CD8-positive, alpha-beta memory T cell (primary cell): ENCODE measurements at regions of chr19 and their contacts with region 1.

Region 1: DNA sequence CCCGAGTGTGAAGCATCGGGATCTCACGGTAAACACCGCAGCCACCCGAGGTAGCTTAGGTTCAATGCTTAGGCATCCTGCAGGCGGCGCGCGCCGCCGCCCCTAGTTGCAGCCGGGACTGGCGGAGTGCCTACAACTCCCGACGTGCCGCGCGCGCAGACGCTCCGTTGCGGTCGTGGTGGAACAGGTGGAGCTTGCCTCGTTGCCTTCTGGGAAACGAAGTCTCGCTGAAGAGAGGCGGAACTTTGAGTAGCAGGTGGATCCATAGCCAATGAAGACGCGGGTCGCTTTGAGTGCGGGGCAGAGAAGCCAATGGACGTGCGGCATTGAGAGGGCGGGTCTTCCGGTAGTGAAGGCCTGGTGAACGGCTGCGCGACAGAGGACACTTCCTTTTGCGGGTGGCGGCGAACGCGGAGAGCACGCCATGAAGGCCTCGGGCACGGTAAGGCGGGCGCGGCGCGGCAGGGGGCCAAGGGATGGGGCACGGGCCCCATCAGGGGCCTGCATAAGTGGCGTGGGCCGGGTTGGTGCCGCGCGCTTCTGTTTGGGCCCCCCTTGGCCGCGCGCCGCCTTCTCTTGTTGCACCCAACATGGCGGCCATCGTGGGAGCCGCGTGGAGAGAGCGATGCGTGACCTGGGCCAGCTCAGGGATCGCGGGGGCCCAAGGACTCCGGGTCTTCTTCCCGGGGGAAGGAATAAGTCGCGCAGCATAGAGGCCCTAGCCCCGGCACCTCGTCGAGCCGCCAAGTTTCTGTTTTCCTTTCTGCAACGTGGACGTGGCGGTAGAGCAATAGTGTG is at the start of gene RPL18A:
- DNase-seq: peak; percentile 97 to 99 (median 99)
- H3K4me3 ChIP-seq: peak within 1 kb of the TSS; percentile 95
- H3K4me3 Mint-ChIP-seq: peak within 1 kb of the TSS; percentile 93 to 100 (median 97)
- H3K27ac ChIP-seq: peak within 1 kb of the TSS; percentile 80
- H3K27ac Mint-ChIP-seq: peak within 1 kb of the TSS; percentile 81 to 100 (median 96)
- H3K4me1 ChIP-seq: peaks cover 27% of the 10 kb centered on the region
- H3K4me1 Mint-ChIP-seq: peaks cover 34 to 40% (median 36%) of the 10 kb centered on the region in 3 donors
- H3K27me3 ChIP-seq: no peaks in the 10 kb centered on the region
- H3K27me3 Mint-ChIP-seq: peaks cover 0 to 4% of the 10 kb centered on the region in 2 donors
- total RNA-seq, gene RPL18A: 3,114 to 3,151 TPM

Region 2: GRCh38 chr19:17703824-17704463 is 155.8 kb before region 1 on chr19:
- CTCF ChIA-PET with region 1: interaction called, 22 read pairs
- POLR2A ChIA-PET with region 1: interaction called, 5 read pairs
- DNase-seq: peak; percentile 59 to 75 (median 66)
- H3K4me3 ChIP-seq: no peak overlapping the region
- H3K4me3 Mint-ChIP-seq: no peak overlapping the region
- H3K27ac ChIP-seq: no peak overlapping the region
- H3K27ac Mint-ChIP-seq: peak overlapping the region in 1 of 8 donors; percentile 29
- H3K4me1 ChIP-seq: no peaks in the 10 kb centered on the region
- H3K4me1 Mint-ChIP-seq: peaks cover 0 to 4% (median 2%) of the 10 kb centered on the region in 3 donors
- H3K27me3 ChIP-seq: peaks cover 2% of the 10 kb centered on the region
- H3K27me3 Mint-ChIP-seq: peaks cover 3 to 16% of the 10 kb centered on the region in 2 donors

Region 3: DNA sequence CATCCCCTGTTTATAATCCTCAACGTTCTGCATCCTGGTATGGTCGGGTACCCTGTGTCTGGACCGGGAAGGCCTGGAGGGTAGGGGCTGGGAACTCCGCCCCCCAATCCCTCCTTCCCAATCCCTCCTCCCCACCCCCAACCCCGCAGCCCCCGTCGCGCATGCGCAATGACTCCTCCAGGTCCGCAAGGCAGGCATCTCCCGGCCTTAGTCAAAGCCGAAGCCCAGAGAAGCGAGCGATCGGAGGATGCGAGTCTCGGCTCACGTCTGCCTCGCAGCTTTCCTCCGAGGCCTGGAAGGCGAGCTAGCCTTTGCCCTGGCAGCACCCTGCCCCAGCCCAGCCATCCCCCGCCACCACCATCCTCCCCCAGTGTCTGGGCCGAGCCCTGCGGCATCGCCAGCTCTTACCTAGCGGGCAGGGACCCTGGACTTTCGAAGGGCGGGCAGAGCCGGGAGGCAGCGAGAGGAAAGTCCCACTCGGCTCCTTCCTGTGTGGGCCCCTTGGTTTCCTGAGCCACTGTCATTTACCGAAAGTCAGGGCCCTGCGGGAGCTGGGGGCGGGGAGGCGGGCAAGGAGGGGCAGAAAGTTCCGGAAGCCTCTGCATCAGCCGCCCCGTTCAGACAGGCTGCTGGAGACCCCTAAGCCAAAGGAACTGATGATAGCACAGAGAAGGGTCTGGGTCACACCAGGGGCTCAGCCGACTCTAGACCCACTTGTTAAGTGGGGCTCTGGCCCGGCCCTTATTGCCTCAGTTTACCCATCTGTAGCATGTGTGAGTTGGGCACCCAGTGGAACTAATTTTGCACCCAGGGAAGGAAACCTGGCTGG is 12.0 kb before region 1 on chr19 and contains the start of gene JAK3:
- CTCF ChIA-PET with region 1: interaction called, 17 read pairs
- POLR2A ChIA-PET with region 1: interaction called, 25 read pairs
- DNase-seq: peak; percentile 74 to 89 (median 81)
- H3K4me3 ChIP-seq: peak within 1 kb of the TSS; percentile 80
- H3K4me3 Mint-ChIP-seq: peak within 1 kb of the TSS; percentile 87 to 97 (median 93)
- H3K27ac ChIP-seq: peak within 1 kb of the TSS; percentile 69
- H3K27ac Mint-ChIP-seq: peak within 1 kb of the TSS; percentile 94 to 98 (median 96)
- H3K4me1 ChIP-seq: peaks cover 63% of the 10 kb centered on the region
- H3K4me1 Mint-ChIP-seq: peaks cover 57 to 77% (median 72%) of the 10 kb centered on the region in 3 donors
- H3K27me3 ChIP-seq: no peaks in the 10 kb centered on the region
- H3K27me3 Mint-ChIP-seq: peaks cover 0 to 3% of the 10 kb centered on the region in 2 donors
- total RNA-seq, gene JAK3: 119 to 125 TPM

Region 4: GRCh38 chr19:17932485-17933338 is 73.0 kb after region 1 on chr19 and contains the start of gene CCDC124:
- CTCF ChIA-PET with region 1: interaction called, 213 read pairs
- POLR2A ChIA-PET with region 1: interaction called, 124 read pairs
- DNase-seq: peak; percentile 86 to 95 (median 93)
- H3K4me3 ChIP-seq: peak within 1 kb of the TSS; percentile 83
- H3K4me3 Mint-ChIP-seq: peak within 1 kb of the TSS; percentile 84 to 97 (median 92)
- H3K27ac ChIP-seq: peak within 1 kb of the TSS; percentile 82
- H3K27ac Mint-ChIP-seq: peak within 1 kb of the TSS; percentile 94 to 100 (median 96)
- H3K4me1 ChIP-seq: peaks cover 14% of the 10 kb centered on the region
- H3K4me1 Mint-ChIP-seq: peaks cover 14 to 31% (median 16%) of the 10 kb centered on the region in 3 donors
- H3K27me3 ChIP-seq: no peaks in the 10 kb centered on the region
- H3K27me3 Mint-ChIP-seq: no peaks in the 10 kb centered on the region
- total RNA-seq, gene CCDC124: 184 to 195 TPM

Region 5: DNA sequence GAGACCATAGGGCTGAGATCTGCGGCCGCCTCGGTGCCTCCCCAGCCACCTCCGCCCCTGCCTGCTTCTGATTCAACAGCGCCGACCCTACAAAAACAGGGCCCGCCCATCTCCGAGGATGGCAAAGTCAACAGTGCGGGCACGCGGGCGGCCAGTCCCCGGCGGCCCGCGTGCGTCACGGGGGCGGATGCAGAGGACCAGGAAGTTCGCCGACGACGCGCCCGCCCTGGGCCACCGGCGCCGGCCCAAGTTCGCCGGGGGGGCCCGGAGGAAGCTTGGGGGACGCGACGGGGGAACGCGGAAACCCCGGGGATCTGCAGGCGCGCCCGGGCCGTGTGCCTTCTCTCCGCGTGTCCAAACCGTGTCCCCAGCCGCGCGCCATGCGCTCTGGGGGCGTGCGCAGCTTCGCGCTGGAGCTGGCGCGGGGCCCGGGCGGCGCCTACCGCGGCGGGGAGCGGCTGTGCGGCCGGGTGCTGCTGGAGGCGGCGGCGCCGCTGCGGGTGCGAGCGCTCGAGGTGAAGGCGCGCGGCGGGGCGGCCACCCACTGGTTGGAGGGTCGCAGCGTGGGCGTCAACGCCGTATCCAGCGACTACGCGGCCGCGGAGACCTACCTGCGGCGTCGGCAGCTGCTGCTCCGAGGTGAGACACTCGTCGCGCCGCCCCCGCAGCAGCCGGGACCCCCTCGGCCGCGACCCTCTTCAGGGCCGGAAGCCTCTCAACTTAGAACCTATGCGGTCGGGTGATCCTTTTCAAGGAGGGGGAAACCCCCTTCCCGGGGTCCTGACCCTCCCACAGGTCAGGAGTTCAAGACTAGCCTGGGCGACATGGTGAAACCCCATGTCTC is 141.4 kb after region 1 on chr19:
- CTCF ChIA-PET with region 1: interaction called, 38 read pairs
- POLR2A ChIA-PET with region 1: interaction called, 12 read pairs
- DNase-seq: peak; percentile 94 to 98 (median 98)
- H3K4me3 ChIP-seq: peak overlapping the region; percentile 90
- H3K4me3 Mint-ChIP-seq: peak overlapping the region; percentile 81 to 95 (median 90)
- H3K27ac ChIP-seq: peak overlapping the region; percentile 88
- H3K27ac Mint-ChIP-seq: peak overlapping the region; percentile 93 to 100 (median 98)
- H3K4me1 ChIP-seq: peaks cover 21% of the 10 kb centered on the region
- H3K4me1 Mint-ChIP-seq: peaks cover 19 to 44% (median 19%) of the 10 kb centered on the region in 3 donors
- H3K27me3 ChIP-seq: no peaks in the 10 kb centered on the region
- H3K27me3 Mint-ChIP-seq: no peaks in the 10 kb centered on the region